Activated CD8-positive, alpha-beta T cell treated with anti-CD3 and anti-CD28 coated beads for 36 hours (primary cell): ENCODE measurements at regions of chrX and their contacts with region 1.

Region 1: GRCh38 chrX:124406294-124407014 is 60.1 kb downstream of the SH2D1A start:
- DNase-seq: peak; percentile 80
- ATAC-seq: peak; percentile 98
- H3K4me3 Mint-ChIP-seq: no peak overlapping the region
- H3K27ac Mint-ChIP-seq: peak overlapping the region; percentile 25
- H3K4me1 Mint-ChIP-seq: peaks cover 14% of the 10 kb centered on the region
- H3K27me3 Mint-ChIP-seq: no peaks in the 10 kb centered on the region
- CTCF ChIP-seq: peak; percentile 60

Region 2: DNA sequence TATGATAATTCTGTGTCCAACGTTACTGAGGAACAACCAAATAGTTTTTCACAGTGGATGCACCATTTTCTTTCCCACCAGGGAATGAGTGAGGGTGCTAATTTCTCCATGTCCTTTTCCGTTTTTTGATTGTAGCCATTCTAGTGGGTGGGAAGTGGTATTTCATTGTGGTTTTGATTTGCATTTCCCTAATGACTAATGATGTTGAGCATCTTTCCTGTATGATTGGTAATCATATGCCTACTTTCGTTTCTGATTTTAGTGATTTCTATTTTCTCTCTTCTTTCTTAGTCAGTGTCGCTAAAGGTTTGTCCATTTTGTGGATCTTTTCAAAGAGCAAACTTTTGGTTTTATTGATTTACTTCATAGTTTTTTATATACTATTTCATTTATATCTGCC is 106.0 kb before region 1 on chrX:
- CTCF ChIA-PET with region 1: no interaction called
- POLR2A ChIA-PET with region 1: no interaction called
- intact Hi-C with region 1: no loop called
- DNase-seq: no peak
- ATAC-seq: peak; percentile 72
- H3K4me3 Mint-ChIP-seq: peak overlapping the region; percentile 67
- H3K27ac Mint-ChIP-seq: peak overlapping the region; percentile 85
- H3K4me1 Mint-ChIP-seq: peaks cover 35% of the 10 kb centered on the region
- H3K27me3 Mint-ChIP-seq: no peaks in the 10 kb centered on the region
- CTCF ChIP-seq: no peak

Region 3: DNA sequence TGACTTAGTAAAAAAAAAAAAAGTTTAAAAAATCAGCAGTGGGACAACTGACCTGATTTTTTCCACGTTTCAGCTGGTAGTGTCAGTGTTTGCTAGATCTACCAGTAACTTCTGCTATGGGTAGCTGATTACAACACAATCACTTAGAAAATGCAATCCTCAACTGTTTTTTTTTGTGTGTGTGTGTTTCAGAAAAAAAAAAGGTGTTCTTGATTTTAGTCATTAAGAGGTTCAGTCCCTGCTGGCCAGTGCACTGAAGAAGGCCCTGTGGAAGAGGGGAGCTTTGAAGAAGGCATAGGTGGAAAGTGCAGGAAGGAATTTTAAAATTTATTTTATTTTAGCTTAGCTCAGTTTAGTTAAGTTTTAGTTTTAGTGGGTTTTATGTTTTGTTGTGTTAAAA is 13.2 kb before region 1 on chrX:
- CTCF ChIA-PET with region 1: interaction called, 10 read pairs
- POLR2A ChIA-PET with region 1: interaction called, 4 read pairs
- intact Hi-C with region 1: no loop called
- DNase-seq: no peak
- ATAC-seq: peak; percentile 40
- H3K4me3 Mint-ChIP-seq: no peak overlapping the region
- H3K27ac Mint-ChIP-seq: peak overlapping the region; percentile 44
- H3K4me1 Mint-ChIP-seq: peaks cover 48% of the 10 kb centered on the region
- H3K27me3 Mint-ChIP-seq: no peaks in the 10 kb centered on the region
- CTCF ChIP-seq: no peak

Region 4: GRCh38 chrX:125132285-125132684 is 725.8 kb after region 1 on chrX:
- CTCF ChIA-PET with region 1: interaction called, 17 read pairs
- POLR2A ChIA-PET with region 1: no interaction called
- intact Hi-C with region 1: loop called (anchors 2 kb)
- DNase-seq: peak; percentile 1
- ATAC-seq: peak; percentile 39
- H3K4me3 Mint-ChIP-seq: no peak overlapping the region
- H3K27ac Mint-ChIP-seq: no peak overlapping the region
- H3K4me1 Mint-ChIP-seq: no peaks in the 10 kb centered on the region
- H3K27me3 Mint-ChIP-seq: no peaks in the 10 kb centered on the region
- CTCF ChIP-seq: peak; percentile 34